ENCODE measurements at regions of chr16 and their contacts with region 1.

Region 1: GRCh38 chr16:79887541-79888540 is 287.3 kb upstream of the MAF start:
- DNase-seq: no peak
- H3K4me3 Mint-ChIP-seq: no peak overlapping the region
- H3K27ac Mint-ChIP-seq: no peak overlapping the region
- H3K4me1 Mint-ChIP-seq: no peaks in the 10 kb centered on the region
- H3K27me3 Mint-ChIP-seq: no peaks in the 10 kb centered on the region

Region 2: DNA sequence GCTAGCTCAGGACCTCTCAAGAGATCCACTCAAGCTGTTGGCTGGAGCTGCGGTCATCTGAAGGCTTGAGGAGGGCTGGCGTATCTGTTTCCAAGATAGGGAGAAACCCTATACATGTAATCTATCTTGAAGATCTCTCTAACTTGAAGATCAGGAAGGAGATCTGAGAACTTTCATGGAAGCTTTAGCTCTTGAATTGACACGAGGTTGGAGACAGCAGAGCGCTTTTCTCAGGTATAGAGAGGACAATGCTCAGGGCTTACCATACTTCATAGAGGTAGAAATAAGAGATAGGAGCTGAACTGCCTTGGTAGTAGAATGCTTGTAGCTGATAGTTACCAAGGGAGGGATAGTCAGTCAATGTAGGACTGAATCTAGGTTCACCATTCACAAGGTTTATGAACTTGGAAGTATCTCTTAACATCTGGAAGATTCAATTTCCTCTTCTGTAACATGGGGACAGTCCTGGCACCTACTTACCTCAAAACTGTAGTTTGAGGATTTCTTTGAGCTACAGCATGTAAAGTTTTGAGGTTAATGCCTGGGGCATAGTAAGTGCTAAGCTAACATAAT is 20.3 kb before region 1 on chr16:
- CTCF ChIA-PET with region 1: no interaction called
- intact Hi-C with region 1: loop called (anchors 2 kb)
- DNase-seq: no peak
- H3K4me3 Mint-ChIP-seq: no peak overlapping the region
- H3K27ac Mint-ChIP-seq: no peak overlapping the region
- H3K4me1 Mint-ChIP-seq: no peaks in the 10 kb centered on the region
- H3K27me3 Mint-ChIP-seq: peaks cover 2% of the 10 kb centered on the region

Region 3: GRCh38 chr16:80174418-80174817 is 286.6 kb after region 1 on chr16:
- CTCF ChIA-PET with region 1: no interaction called
- intact Hi-C with region 1: no loop called
- DNase-seq: no peak
- H3K4me3 Mint-ChIP-seq: no peak overlapping the region
- H3K27ac Mint-ChIP-seq: no peak overlapping the region
- H3K4me1 Mint-ChIP-seq: no peaks in the 10 kb centered on the region
- H3K27me3 Mint-ChIP-seq: peaks cover 6% of the 10 kb centered on the region